Dorsolateral prefrontal cortex (tissue), 120 donors: ENCODE measurements at regions of chr16 and their contacts with region 1.

Region 1: DNA sequence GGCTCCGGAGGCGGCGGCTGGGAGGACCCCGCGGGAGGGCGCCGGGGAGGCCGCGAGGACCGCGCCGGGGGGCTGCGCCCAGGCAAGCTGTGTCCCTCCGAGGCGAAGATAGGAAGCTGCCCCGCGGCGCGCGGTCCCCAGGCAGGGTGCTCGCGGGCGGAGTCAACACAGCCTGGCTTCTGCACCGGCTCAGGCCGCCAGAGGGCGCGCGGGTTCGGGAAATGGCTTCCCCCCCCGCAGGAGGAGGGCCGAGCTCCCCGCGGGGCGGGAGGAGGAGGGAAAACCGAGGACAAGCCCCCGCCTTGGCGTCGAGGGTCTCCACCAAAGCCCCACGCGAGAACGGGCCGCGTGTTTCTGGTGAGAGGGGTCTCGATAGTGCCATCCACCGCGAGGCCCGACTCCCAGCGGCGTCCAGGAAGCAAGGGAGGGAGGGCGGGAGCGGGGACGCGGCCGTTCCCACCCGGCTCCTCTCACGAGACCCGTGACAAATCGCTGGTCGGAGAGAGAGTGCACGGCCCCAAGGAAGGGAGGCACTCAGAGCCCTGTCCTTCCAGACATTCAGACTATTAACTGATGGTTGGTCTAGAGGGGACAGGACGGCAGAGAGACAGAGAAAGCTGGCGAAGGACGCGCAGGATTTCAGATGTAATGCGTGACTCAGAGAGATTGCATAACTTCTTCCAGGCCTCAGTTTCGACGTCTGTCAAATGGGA is 64.4 kb upstream of the DNAJA2 start:
- DNase-seq: peak; percentile 75 to 93 (median 85)
- H3K4me3 ChIP-seq: peak overlapping the region; percentile 54 to 86 (median 68)
- H3K27ac ChIP-seq: peak overlapping the region in 42 of 59 donors; percentile 5 to 84 (median 52)
- H3K27me3 ChIP-seq: no peaks in the 10 kb centered on the region
- CTCF ChIP-seq: peak; percentile 57 to 98 (median 92)

Region 2: DNA sequence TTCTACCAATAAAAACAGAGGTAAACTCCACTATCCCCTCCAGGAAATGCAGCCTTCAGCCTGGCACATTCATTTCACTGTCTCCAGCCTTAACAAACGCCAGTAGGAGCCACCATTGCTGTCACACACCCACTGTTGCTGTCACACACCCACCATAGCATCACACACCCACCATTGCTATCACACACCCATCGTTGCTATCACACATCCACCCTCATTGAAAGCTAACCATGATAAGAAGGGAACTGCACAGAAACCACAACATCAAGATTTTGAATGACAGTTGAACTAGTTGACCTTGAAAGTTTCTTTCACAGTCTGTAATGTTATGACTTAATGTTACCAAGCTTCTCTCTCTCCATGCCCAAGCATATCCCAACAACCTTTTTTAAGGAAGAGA is 454.9 kb before region 1 on chr16:
- intact Hi-C with region 1: no loop called
- DNase-seq: no peak
- H3K4me3 ChIP-seq: no peak overlapping the region
- H3K27ac ChIP-seq: no peak overlapping the region
- H3K27me3 ChIP-seq: no peaks in the 10 kb centered on the region
- CTCF ChIP-seq: no peak

Region 3: DNA sequence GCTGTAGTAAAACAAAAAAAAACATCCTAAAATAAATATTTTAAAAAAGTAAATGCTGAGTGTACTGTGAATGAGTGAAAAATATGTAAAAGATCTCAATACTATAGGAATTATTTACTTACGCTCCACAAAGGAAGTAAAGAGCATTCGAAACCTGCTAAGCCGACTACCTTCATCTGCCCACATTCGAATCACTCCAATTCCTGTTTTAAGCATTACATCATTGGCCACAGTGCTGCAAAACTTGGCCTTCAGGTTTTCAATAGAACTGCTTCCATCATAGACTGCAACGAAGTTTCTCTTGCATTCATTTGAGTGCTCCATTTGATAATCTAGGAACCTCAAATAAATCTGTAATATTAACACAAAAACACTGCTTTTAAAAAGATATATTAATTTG is 71.5 kb after region 1 on chr16:
- intact Hi-C with region 1: no loop called
- DNase-seq: no peak
- H3K4me3 ChIP-seq: no peak overlapping the region
- H3K27ac ChIP-seq: no peak overlapping the region
- H3K27me3 ChIP-seq: no peaks in the 10 kb centered on the region
- CTCF ChIP-seq: no peak

Region 4: DNA sequence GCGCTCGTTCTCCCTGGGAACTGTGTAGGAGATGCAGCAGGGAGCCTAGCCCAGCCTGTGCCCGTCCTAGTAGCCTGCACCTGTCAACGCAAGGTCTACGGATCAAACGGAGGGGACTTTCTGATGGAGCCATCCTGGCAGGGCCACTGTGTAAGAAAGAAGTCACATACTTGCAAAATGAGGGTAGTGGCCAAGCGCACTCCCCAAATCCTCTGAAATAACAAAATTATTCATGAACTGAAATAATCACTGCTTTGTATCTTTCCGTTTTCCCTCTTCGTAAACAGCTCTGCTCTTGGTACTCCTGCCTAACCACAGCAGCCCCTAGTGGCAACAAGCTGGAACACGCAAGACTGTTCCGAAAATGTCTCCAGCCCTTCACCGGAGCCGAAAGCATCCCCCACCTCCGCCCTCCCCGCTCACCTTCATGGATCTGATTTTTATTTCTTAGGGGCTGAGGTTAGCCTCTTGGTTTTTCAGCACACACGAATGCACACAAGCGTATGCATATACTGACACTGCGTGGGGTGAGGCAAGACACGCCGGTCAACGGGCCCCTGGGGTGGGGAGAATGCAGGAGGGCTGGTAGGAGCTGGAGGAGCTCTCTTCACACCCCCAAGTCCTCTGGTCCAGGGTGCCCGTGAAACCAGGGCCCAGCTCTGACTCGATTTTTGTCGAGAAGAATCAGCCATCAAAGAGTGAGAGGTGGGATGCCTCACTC is 1017.1 kb after region 1 on chr16:
- intact Hi-C with region 1: loop called in 1 of 2 experiments (anchors 10 kb)
- DNase-seq: peak; percentile 44 to 82 (median 73)
- H3K4me3 ChIP-seq: peak overlapping the region; percentile 12 to 72 (median 51)
- H3K27ac ChIP-seq: peak overlapping the region; percentile 41 to 96 (median 88)
- H3K27me3 ChIP-seq: no peaks in the 10 kb centered on the region
- CTCF ChIP-seq: peak; percentile 67 to 92 (median 86)

Region 5: DNA sequence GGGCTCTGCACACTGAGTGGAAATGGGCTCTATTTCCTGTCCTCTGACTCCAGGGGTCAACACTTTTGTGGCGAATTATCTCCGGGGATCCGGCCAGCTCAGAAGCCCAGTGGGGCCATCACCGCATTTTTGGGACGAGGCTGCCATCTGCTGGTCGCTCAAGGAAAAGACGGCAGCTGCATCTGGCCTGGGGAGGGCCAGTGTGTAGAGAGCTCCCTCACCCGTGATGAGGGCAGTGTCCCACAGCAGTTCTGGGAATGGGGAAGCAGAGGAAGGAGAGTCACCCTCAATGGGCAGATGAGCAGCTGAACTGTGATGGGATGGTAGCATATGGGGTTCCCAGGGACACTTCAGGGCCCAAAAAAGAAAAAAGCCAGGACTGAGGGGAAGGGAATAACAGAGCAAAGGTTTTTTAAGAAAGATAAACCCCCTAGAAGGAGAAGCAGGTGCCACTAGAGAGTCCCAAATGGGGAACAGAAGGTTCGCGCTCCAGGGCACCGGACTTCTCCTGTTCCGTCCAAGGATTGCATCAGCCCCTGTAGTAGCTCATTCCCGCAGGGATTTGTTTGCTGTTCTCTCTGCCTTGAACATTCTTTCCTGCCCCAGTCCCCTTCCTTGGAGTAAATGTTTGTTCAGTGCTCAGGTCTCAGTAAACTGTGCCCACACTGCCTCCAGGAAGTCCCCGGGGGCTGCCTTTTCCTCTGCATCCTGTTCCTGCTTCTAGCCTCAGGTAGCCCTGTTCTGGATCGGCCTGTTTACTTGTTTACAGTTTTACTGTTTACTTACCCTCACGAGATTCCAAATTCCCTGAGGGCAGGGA is 1127.2 kb after region 1 on chr16:
- intact Hi-C with region 1: loop called (anchors 2 to 5 kb)
- DNase-seq: peak; percentile 66 to 90 (median 78)
- H3K4me3 ChIP-seq: peak overlapping the region in 26 of 59 donors; percentile 10 to 47 (median 26)
- H3K27ac ChIP-seq: peak overlapping the region in 2 of 59 donors; percentile 14 to 18
- H3K27me3 ChIP-seq: no peaks in the 10 kb centered on the region
- CTCF ChIP-seq: peak; percentile 62 to 94 (median 89)